WTC11 (cell line): ENCODE measurements at regions of chr11 and their contacts with region 1.

Region 1: GRCh38 chr11:73350908-73351636 is 25.1 kb upstream of the RELT start:
- DNase-seq: peak; percentile 50
- ATAC-seq: peak; percentile 40
- H3K4me3 Mint-ChIP-seq: no peak overlapping the region
- H3K27ac Mint-ChIP-seq: no peak overlapping the region
- H3K4me1 Mint-ChIP-seq: peaks cover 2% of the 10 kb centered on the region; the same call in 1 of the 2 replicates
- H3K27me3 Mint-ChIP-seq: no peaks in the 10 kb centered on the region
- CTCF ChIP-seq: peak; percentile 96

Region 2: DNA sequence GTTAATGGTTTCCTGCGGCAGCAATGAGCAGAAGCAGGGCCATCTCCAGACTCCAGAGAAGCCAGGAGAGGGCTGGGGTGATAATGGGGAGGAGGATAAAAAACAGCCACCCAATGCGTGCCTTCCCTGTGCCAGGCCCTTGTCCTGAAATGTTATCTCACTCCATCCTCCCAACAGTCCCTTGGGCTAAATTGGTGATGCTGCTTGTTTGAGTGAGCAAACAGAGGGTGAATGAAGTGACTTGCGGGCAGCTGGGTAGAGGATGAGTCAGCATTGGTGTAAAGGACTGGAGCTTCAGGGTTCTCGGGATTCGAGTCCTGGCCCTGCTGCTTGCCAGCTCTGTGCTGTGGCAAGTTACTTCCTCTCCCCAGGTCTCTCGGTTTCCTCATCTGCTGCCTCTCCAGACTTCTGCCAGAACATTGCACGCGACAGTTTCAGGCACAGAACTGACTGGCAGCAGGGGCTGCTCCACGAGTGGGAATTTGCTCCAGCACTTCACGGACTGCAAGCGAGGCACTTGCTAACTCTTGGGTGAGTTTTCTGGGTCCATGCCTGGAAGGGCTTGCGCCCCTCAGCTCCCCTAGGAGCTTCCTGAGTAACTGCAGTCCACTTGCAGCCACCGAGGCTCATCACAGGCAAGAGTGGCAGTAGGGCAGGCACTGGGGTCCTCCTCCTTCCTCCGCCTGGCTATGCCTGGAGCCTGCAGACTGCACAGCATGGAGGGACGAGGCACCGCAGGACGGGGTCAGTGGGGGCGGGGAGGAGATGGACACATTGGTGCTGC is 78.9 kb before region 1 on chr11 and contains the start of gene P2RY6:
- CTCF ChIA-PET with region 1: interaction called, 20 read pairs
- POLR2A ChIA-PET with region 1: no interaction called
- DNase-seq: peak; percentile 13
- ATAC-seq: no peak; the same call in 1 of the 2 replicates
- H3K4me3 Mint-ChIP-seq: no peak within 1 kb of the TSS
- H3K27ac Mint-ChIP-seq: no peak within 1 kb of the TSS; the same call in 1 of the 2 replicates
- H3K4me1 Mint-ChIP-seq: peaks cover 34% of the 10 kb centered on the region
- H3K27me3 Mint-ChIP-seq: 0 out of 2 replicates have a peak, but pooled peaks cover under 1% of the 10 kb centered on the region
- CTCF ChIP-seq: no peak
- total RNA-seq, gene P2RY6: 0.11 to 0.16 TPM in 2 of 3 replicates, not detected in the other

Region 3: DNA sequence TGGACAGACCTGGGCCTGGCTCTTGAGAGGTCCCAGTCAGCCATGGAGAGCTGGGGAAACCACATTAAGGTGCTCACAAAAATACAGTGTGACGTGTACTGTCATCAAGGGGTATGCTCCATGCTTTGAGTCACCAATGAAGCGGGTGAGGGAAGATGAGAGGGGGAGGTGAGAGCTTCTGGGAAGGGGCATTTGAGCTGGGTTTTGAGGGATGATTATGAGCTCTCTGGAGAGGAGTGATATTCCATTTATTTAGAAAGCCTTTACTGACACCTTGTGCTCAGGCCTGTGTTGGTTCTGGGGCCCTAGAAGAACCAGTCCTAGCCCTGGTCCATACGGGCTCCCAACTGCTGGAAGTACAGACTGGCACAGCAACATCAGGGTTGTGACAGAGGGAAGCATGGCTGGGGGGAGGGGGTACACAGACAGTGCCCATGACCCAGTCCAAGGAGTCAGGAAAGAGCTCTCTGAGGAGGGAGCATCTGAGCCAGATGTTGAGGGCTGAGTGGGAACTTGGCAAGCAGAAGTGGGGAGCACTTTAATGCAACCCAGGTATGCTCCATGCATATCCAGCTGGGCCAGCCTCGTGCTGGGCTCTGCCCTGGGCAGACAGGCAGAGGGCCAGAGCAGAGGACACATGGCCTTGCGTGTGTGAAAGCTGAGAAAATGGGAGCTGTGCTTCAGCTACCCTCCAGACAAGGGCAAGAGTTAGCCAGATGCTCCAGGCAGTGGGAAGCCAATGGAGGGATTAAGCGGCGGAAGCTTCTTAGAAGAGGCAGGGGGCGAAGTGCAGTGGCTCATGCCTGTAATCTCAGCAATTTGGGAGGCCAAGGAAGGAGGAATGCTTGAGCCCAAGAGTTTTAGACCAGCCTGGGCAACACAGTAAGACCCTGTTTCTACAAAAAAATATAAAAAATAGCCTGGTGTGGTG is 53.1 kb before region 1 on chr11:
- CTCF ChIA-PET with region 1: interaction called, 56 read pairs
- POLR2A ChIA-PET with region 1: no interaction called
- DNase-seq: no peak
- ATAC-seq: no peak
- H3K4me3 Mint-ChIP-seq: no peak overlapping the region
- H3K27ac Mint-ChIP-seq: no peak overlapping the region
- H3K4me1 Mint-ChIP-seq: peaks cover 12% of the 10 kb centered on the region
- H3K27me3 Mint-ChIP-seq: peaks cover 6% of the 10 kb centered on the region
- CTCF ChIP-seq: no peak

Region 4: DNA sequence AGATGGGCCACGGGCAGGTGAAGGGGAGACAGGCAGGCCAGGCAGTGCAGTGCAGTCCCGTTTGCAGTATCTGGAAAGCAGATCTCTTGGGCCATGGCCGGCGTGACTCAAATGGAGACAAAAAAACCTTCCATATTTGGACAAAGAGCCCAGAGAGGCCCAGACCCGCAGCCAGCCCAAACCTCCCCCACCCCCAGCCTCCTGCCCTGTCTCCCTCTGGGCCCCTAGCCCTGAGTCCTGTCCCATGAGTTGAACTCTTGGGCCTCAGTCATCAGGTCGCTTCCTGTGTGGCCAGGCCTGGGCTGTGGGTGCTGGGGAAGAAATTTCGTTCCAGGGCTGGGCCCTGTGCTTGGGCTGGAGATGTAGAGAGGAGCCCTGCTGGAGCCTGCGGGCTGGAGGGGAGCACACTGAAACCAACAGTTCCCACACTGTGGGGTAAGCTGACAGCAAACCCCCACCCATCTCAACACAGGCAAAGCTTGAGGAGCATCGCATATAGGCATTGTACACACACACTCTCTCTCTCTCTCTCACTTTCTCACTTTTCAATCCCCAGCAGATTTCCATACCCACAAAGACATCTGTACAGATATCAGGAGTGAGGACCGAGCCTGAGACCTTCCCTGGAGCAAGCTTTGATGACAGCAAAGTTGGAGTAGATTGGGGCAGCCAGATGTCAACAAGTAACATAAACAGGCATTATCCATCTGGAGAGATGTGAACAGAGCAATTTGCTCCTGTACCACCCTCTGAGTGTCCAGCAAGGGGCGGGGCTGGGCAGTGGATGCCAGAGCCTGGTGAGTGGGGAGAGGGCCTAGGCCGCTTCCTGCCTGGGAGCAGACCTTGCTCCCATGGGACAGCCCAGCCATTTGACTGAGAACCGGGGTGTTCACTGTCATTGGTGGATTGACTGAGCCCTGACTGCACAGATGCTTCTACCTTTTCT is 25.8 kb before region 1 on chr11:
- CTCF ChIA-PET with region 1: interaction called, 26 read pairs
- POLR2A ChIA-PET with region 1: interaction called, 3 read pairs
- DNase-seq: no peak
- ATAC-seq: no peak
- H3K4me3 Mint-ChIP-seq: no peak overlapping the region
- H3K27ac Mint-ChIP-seq: no peak overlapping the region
- H3K4me1 Mint-ChIP-seq: peaks cover 44% of the 10 kb centered on the region
- H3K27me3 Mint-ChIP-seq: peaks cover 24% of the 10 kb centered on the region
- CTCF ChIP-seq: no peak

Region 5: DNA sequence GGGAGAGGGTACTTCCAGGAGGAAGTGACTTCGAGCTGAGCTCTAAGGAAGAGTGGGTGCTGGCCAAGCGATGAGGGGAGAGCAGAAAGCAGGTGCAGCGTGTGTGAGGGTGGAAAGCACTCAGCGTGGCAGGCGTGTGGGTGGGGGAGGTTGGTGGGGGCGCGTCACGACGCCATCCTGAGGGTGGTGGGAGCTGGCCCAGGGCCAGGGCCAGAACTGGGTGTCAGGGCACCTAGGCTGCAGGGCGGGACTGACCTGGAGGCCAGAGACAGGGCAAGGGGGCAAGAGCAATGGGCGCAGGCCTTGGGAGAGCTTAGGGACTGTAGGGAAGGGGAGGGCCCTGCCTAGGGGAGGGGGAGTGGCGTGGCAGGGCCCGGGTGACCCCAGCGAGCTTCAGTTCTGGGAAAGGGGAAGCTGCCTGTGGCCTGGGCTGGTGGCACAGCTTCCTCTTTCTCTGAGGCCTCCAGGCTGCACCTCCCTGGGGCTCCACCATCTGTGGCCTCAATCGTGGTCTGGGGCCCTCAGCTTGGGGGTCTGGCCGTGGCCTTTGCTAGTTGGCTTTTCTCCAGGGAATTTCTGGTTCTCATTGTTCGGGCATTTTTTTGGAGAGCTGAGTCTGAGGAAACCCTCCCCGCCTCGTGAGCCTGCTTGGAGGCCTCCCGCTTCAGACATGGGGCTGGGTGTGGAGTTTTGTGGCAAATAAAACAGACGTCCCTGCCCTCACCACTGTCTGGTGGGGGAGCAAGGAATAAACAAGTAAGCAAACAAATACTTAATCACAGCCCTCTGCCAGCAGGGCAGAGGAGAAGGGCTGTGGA is 34.0 kb after region 1 on chr11:
- CTCF ChIA-PET with region 1: interaction called, 36 read pairs
- POLR2A ChIA-PET with region 1: no interaction called
- DNase-seq: no peak
- ATAC-seq: no peak
- H3K4me3 Mint-ChIP-seq: no peak overlapping the region
- H3K27ac Mint-ChIP-seq: peak overlapping the region; percentile 32; the same call in 1 of the 2 replicates
- H3K4me1 Mint-ChIP-seq: peaks cover 11% of the 10 kb centered on the region
- H3K27me3 Mint-ChIP-seq: no peaks in the 10 kb centered on the region
- CTCF ChIP-seq: no peak

Region 6: DNA sequence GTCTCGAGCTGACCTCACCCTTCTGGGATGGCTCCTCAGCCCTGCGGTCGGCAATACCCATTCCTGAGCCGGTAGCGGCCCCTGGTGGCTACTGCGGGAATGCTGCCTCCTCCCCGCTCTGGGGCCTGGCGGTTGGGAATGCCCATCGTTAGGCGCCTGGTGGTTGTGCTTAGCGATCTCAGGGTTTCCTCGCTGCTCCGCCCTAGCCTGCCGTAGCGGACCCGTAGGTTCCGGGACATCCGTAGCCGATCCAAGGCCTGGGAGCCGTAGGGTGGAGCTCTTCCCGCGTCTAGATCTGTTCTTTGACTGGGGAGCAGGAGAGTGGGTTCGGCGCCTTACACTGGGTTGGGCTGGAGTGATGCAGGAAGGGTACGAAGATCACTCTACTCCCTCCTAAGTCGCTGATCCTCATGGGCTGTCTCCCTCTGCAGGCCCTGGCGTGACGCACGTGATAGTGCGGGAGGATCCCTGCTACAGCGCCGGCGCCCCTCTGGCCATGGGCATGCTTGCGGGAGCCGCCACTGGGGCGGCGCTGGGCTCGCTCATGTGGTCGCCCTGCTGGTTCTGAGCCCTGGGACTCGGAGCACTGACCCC is 310.1 kb after region 1 on chr11:
- CTCF ChIA-PET with region 1: interaction called, 22 read pairs
- POLR2A ChIA-PET with region 1: no interaction called
- DNase-seq: peak; percentile 99
- ATAC-seq: peak; percentile 88
- H3K4me3 Mint-ChIP-seq: peak overlapping the region; percentile 72
- H3K27ac Mint-ChIP-seq: peak overlapping the region; percentile 33; the same call in 1 of the 2 replicates
- H3K4me1 Mint-ChIP-seq: peaks cover 13% of the 10 kb centered on the region
- H3K27me3 Mint-ChIP-seq: peaks cover 72% of the 10 kb centered on the region
- CTCF ChIP-seq: peak; percentile 91